Dendritic cell treated with granulocyte-macrophage colony-stimulating factor and Interleukin-4, amounts not matched to agents 40 ng/mL and 50 ng/mL, for 4 days (primary cell): ENCODE measurements at regions of chr3 and their contacts with region 1.

Region 1: DNA sequence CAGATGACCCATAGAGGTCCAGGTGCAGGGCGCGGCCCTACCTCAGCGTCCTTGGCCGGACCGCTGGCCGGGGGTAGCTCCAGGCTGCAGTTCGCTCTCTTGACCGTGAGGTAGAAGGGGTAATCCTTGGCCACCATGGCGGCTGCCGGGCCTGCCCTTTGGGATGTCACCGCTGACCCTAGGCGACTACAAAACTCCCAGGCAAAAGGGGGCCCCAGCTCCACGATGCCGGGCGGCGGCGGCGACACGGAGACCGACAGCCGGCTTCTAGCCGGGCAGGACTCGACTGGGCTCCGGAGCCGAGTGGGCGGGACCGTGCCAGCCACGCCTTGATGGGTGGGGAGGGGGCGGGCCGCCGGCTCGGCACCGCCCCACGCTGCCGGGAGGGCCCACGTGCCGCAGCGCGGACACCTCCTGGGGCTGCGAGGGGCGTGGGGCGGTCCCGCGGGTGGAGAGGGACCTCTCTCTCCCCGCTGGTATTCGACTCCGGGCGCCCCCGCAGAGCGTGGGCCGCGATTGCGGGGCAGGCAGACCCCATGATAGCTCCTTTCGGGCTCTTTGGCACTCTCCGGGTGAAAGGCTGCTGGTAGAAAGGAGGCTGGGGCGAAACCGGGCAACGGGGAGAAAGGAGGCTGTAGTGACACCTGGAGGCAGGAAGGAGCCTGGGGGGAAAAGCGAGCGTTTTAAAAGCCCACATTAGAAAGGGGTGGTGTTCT is at the start of gene ARHGEF3:
- H3K4me3 Mint-ChIP-seq: peak within 1 kb of the TSS; percentile 94
- H3K27ac Mint-ChIP-seq: peak within 1 kb of the TSS; percentile 68
- H3K4me1 Mint-ChIP-seq: peaks cover 22% of the 10 kb centered on the region
- H3K27me3 Mint-ChIP-seq: peaks cover 2% of the 10 kb centered on the region

Region 2: GRCh38 chr3:56702490-56703315 is 99.1 kb before region 1 on chr3:
- intact Hi-C with region 1: loop called (anchors 1 kb)
- H3K4me3 Mint-ChIP-seq: no peak overlapping the region
- H3K27ac Mint-ChIP-seq: no peak overlapping the region
- H3K4me1 Mint-ChIP-seq: peaks cover 10% of the 10 kb centered on the region
- H3K27me3 Mint-ChIP-seq: no peaks in the 10 kb centered on the region

Region 3: GRCh38 chr3:56753206-56753820 is 48.5 kb before region 1 on chr3:
- intact Hi-C with region 1: loop called (anchors 2 kb)
- H3K4me3 Mint-ChIP-seq: no peak overlapping the region
- H3K27ac Mint-ChIP-seq: peak overlapping the region; percentile 98
- H3K4me1 Mint-ChIP-seq: peaks cover 68% of the 10 kb centered on the region
- H3K27me3 Mint-ChIP-seq: no peaks in the 10 kb centered on the region

Region 4: DNA sequence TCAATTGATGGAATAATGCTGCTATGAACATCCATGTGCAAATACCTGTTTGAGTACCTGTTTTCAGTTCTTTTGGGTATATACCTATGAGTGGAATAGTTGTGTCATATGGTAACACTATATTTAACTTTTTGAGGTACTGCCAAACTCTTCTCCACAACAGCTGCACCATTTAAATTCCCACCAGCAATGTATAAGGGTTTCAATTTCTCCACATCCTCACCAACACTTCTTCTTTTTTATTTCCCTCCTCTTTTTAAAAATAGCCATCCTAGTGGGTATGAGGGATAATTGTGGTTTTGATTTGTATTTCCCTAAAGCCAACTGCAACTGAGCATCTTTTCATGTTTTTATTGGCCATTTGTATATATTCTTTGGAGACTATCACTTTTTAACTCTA is 31.2 kb after region 1 on chr3:
- intact Hi-C with region 1: loop called (anchors 2 kb)
- H3K4me3 Mint-ChIP-seq: no peak overlapping the region
- H3K27ac Mint-ChIP-seq: no peak overlapping the region
- H3K4me1 Mint-ChIP-seq: peaks cover 17% of the 10 kb centered on the region
- H3K27me3 Mint-ChIP-seq: peaks cover 63% of the 10 kb centered on the region

Region 5: DNA sequence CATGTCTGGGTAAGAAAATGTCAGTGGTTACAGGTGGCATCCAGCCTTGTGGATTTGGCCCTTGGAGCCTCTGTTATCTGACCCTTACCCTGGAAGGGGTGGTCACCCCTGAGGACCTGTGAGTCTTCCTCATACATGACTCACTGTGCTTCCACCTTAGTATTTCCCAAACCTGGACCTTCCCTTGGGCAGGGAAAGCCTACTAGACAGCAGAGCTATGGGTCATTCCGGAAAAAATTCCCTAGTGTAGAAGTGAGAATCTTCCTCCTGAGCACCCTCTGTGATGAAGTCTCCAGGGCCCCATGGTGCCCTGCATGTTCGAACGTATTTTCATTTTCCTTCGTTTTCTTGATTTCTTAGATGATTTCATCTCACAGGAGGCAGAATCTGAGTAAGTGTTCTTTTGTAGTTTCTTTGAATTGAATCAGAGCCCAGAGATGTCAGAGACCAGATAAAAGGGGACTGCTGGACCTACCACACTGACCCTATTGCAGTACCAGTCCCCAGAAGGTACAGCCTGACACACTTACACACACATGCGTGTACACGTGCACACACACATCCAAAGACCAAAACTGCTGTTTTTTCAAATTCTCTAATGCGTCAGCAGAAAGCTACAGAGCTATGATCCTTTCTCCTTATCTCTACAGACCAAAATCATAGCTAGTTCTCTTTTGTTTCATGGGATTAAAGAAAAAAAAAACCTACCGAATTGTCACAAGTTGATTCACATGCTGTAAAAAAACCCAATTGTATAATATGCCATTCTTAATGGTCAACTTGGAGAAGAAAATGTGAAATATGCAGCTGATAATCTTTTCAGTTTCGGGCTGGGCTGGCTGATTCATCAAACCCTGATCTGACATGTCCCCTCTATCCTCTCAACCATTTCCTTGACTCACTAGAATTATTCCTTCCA is 50.4 kb after region 1 on chr3:
- intact Hi-C with region 1: no loop called
- H3K4me3 Mint-ChIP-seq: no peak overlapping the region
- H3K27ac Mint-ChIP-seq: no peak overlapping the region
- H3K4me1 Mint-ChIP-seq: peaks cover 7% of the 10 kb centered on the region
- H3K27me3 Mint-ChIP-seq: peaks cover 18% of the 10 kb centered on the region